Sigmoid colon (tissue), 7 donors: ENCODE measurements at regions of chr17 and their contacts with region 1.

Region 1: DNA sequence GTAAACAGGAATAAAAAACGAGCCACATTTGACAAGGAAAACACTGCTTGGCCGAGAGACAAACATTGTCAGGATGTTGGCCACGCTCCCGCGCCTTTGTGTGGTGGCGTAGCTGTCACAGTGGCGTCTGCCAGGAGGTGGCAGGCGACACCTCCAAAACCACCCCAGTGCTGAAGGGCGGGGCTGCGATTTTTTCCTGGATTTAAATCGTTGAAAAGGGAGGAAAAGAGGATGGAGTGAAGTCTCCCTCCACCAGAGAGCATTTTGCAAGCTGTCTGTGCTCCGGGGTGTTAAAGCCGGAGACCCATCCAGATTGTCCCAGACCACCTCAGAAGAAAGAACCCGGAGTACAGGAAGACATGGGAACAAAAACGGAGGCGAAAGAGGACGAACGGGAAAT is 12.7 kb downstream of the MRM3 start:
- DNase-seq: peak; percentile 94
- H3K4me3 ChIP-seq: peak overlapping the region in 3 of 4 donors; percentile 18 to 31 (median 19)
- H3K27ac ChIP-seq: peak overlapping the region; percentile 67 to 78 (median 75)
- H3K4me1 ChIP-seq: peaks cover 0 to 32% (median 25%) of the 10 kb centered on the region in 4 donors
- H3K27me3 ChIP-seq: no peaks in the 10 kb centered on the region
- CTCF ChIP-seq: peak; percentile 66 to 82 (median 78)
- EP300 ChIP-seq: no peak
- POLR2A ChIP-seq: no peak

Region 2: DNA sequence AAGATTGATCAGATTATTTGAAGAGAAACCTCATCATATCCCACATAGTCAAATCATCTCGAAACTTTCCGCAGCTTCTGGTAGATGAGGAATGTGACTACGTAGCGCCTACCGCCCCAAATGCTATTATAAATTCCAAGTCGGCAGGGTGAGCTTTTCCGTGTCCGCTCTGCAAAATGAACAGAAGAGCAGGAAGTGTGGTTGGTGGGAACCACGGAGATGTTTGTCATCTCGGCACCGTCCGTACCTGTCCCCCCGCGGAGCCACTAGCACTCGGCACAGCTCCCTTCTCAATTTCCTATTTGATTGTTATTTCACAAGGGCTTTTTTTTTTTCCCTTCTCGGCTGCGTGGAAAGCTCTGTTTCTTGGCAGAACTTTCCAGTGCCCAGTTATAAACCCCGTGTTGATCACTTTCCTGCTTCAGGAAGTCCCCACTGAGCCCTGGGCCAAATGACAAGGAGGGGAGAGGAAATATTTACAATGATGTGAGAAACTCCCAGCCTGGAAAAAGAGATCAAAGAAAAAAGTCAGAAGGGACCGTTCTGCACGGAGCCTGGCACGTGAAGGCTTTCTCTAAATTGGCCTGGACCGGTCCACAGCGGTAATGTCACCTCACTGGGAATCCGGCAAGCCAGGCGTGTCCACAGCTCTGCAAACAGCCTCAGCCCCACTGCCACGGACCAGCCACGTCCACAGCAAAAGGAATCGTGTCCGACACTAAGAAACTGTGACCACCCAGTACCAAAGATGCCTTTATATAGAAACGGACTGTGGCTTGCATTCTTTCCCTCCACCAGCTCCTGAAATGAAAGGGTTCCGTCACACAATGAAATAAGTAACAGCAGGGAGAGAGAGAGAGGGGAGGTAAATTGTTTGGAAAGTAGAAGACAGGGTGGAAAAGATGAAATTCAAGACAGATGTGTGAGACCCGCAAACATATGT is 52.3 kb after region 1 on chr17:
- intact Hi-C with region 1: loop called (anchors 5 kb)
- DNase-seq: no peak
- H3K4me3 ChIP-seq: peak overlapping the region; percentile 7 to 46 (median 38)
- H3K27ac ChIP-seq: peak overlapping the region; percentile 77 to 89 (median 84)
- H3K4me1 ChIP-seq: peaks cover 0 to 77% (median 64%) of the 10 kb centered on the region in 4 donors
- H3K27me3 ChIP-seq: no peaks in the 10 kb centered on the region
- CTCF ChIP-seq: no peak
- EP300 ChIP-seq: no peak
- POLR2A ChIP-seq: no peak

Region 3: DNA sequence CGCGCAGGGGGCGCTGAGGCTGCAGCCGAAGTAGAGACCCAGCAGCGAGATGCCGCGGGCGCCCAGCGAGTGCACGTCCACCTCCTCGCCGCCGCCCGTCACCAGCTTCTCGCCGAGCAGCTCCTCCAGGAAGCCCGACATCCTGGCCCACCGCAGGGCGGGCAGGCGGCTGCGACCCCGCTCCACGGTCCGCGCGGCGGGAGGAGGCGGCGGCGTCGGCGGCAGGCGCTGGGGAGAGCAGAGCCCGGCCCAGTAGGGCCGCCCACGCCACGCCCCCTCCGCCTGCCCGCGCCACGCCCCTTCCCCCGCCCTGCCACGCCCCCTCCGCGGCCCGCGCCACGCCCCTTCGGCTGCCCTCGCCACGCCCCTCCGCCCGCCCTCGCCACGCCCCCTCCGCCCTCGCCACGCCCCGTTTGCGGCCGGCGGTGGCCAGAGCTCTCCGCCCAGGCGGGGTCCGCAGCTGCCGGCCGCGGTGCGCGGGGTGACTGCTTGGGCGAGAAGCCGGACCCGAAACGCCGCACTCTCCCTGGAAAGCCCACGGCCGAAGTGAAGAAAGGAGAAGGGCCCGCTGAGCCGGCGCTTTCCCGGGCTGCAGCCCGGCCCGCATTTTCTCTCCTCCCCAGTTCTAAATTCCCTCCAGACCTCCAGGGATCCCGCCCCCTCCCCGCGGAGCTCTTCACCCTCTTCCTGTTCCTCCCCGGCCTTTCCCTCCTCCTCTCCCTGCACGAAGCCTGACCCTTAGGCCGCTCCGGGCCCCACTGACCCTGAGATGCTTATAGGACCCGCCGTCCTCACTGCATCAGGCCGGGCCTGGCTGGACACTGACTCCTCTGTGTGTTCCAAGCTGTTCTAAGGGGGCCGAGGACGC is 184.9 kb after region 1 on chr17 and contains the start of gene NXN:
- intact Hi-C with region 1: loop called (anchors 1 kb)
- DNase-seq: peak; percentile 94
- H3K4me3 ChIP-seq: peak within 1 kb of the TSS; percentile 69 to 92 (median 72)
- H3K27ac ChIP-seq: peak within 1 kb of the TSS; percentile 88 to 93 (median 90)
- H3K4me1 ChIP-seq: peaks cover 0 to 47% (median 40%) of the 10 kb centered on the region in 4 donors
- H3K27me3 ChIP-seq: no peaks in the 10 kb centered on the region
- CTCF ChIP-seq: peak in 1 of 4 experiments; percentile 13
- EP300 ChIP-seq: no peak
- POLR2A ChIP-seq: peak; percentile 11 to 50
- total RNA-seq, gene NXN: 50.4 to 75.9 (median 67.1) TPM

Region 4: DNA sequence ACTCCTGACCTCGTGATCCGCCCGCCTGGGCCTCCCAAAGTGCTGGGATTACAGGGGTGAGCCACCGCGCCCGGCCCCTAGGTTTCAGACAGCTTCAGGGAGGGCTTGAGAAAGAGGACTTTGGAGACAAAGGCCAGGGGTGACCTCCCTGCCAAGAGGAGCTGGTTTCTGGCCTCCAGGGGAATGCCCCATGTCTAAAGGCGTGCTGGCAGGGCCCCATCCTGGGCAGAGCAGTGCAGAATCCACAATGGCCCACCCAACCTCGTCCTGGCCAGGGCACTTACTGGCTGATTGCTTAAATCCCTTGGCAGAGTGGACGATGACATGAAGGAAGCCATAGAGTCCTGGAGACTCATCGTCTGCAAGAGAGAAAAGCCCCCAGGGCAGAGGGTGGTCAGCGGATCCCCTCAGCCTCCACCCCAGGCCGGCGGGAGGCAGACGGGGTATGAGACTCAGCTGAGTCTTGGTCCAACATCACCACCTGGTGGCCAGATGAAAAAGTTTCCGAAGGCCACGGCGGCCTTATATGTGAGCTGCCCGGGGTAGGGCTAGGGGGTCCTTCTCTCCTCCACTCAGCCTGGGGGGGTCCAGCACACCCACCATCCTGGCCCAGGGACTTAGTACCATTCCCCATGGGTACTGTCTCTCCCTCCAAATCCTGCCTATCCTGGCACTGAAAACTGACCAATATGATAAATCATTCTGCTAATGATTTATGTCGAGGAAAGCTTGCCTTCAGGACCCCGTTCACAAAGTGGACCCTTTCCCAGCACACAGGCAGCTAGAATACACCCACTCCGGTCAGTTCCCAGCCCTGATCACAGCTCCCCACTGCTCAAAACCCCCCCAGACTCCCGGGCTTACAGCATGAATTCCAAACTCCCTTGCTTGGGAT is 261.1 kb after region 1 on chr17:
- intact Hi-C with region 1: loop called (anchors 10 kb)
- DNase-seq: peak; percentile 85
- H3K4me3 ChIP-seq: no peak overlapping the region
- H3K27ac ChIP-seq: peak overlapping the region in 1 of 4 donors; percentile 16
- H3K4me1 ChIP-seq: peaks cover 0 to 11% (median 5%) of the 10 kb centered on the region in 4 donors
- H3K27me3 ChIP-seq: no peaks in the 10 kb centered on the region
- CTCF ChIP-seq: peak; percentile 58 to 84 (median 76)
- EP300 ChIP-seq: no peak
- POLR2A ChIP-seq: no peak